ENCODE measurements at regions of chr11 and their contacts with region 1.

Region 1: DNA sequence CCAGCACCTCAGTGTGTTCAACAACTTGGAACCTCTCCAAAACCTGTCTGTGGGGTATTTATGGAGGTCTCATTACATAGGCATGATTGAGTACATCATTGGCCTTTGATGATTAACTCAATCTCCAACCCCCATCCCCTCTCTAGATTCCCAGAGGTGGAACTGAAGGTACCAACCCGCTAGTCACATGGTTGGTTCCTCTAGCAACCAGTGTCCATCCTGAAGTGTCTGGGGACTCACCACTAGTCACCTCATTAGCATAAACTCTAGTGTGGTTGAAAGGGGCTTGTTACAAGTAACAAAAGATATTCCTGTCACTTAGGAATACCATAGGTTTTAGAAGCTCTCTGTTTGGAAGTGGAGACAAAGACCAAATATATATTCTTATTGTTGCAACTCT is 40.3 kb downstream of the SIK2 start:
- DNase-seq: no peak
- ATAC-seq: no peak
- H3K4me3 ChIP-seq: no peak overlapping the region
- H3K27ac ChIP-seq: no peak overlapping the region
- H3K4me1 ChIP-seq: peaks cover 7% of the 10 kb centered on the region
- H3K27me3 ChIP-seq: no peaks in the 10 kb centered on the region
- CTCF ChIP-seq: no peak

Region 2: DNA sequence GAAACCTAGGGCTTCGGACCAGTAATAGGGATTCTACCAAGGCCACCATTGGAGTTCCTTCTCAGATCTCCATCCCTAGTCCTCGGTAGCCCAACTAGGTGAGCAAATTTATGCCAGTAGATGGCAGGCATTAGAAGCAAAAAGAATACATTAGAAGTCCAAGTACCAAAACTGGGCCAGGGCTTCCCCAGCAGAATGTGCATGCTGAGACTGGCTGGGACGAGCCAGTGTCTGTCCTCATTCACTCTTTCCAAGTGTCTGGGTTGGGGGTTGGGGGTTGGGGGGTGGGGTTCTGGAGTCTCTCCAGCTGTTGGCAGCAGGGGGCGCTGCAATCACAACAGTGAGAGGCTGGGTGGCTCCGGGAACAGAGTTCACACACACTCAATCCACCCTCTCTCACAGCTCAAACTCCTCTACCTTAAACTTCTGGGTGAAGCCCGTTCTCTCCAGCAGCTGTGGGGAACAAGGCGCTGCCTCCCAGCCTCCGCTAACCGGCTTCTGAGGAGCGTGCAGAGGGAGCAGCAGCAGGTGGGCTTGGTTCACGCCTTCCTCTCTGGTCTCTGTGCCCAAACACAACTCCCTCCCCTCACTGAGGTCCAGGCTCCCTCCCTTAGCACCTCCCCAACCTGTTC is 187.9 kb before region 1 on chr11:
- intact Hi-C with region 1: no loop called
- DNase-seq: no peak
- ATAC-seq: peak; percentile 50 to 58
- H3K4me3 ChIP-seq: no peak overlapping the region
- H3K27ac ChIP-seq: no peak overlapping the region
- H3K4me1 ChIP-seq: no peaks in the 10 kb centered on the region
- H3K27me3 ChIP-seq: no peaks in the 10 kb centered on the region
- CTCF ChIP-seq: peak; percentile 35

Region 3: GRCh38 chr11:111703576-111703975 is 61.0 kb after region 1 on chr11:
- intact Hi-C with region 1: loop called (anchors 5 kb)
- DNase-seq: no peak
- ATAC-seq: no peak
- H3K4me3 ChIP-seq: no peak overlapping the region
- H3K27ac ChIP-seq: no peak overlapping the region
- H3K4me1 ChIP-seq: peaks cover 29% of the 10 kb centered on the region
- H3K27me3 ChIP-seq: no peaks in the 10 kb centered on the region
- CTCF ChIP-seq: no peak

Measured in lower lobe of right lung (tissue), 2 donors.